Activated naive CD4-positive, alpha-beta T cell treated with anti-CD3 and anti-CD28 coated beads for 36 hours (primary cell): ENCODE measurements at regions of chr11 and their contacts with region 1.

Region 1: GRCh38 chr11:13861411-13861810 is 101.1 kb upstream of the SPON1 start:
- DNase-seq: peak; percentile 45
- H3K4me3 Mint-ChIP-seq: no peak overlapping the region
- H3K27ac Mint-ChIP-seq: peak overlapping the region; percentile 43
- H3K4me1 Mint-ChIP-seq: peaks cover 34% of the 10 kb centered on the region
- H3K27me3 Mint-ChIP-seq: no peaks in the 10 kb centered on the region

Region 2: DNA sequence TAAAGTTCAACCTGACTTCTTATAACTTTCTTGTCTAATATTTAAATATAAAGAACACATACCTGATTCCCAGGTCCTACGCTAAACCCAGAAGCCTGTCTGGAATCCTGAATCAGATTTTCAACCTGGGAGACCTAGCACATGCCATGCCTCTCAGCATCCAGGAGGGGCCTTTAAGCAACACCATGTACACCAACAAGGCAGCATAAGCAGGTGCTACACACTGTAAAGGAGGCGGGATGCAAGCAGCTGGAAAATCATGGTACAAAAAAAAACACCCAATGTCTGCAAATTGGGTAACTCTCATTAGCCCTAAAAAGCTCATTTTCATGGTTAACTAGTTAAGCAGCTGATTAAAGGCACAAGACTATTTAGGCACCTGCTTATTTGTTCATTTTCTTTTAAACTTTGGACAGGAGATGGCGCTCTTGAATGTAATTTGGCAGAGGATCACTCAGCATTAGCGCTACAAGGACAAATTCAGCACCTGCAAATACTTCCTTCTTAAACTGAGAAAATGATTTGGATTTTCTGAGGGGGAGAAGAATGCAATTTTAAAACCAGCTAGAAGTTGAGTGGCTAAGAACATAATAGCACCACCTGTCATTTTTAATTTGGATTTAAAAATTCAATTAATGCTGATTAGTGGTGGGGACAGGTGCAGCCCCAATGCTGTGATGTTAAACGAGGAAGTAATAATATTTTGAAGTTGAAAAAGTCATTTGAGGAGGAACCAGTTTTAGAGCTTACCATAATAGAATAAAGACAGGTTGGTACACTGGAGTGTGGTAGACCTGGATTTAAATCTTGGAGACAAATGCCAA is 89.0 kb before region 1 on chr11:
- CTCF ChIA-PET with region 1: interaction called, 4 read pairs
- intact Hi-C with region 1: loop called (anchors 2 kb)
- DNase-seq: peak; percentile 35
- H3K4me3 Mint-ChIP-seq: no peak overlapping the region
- H3K27ac Mint-ChIP-seq: no peak overlapping the region
- H3K4me1 Mint-ChIP-seq: no peaks in the 10 kb centered on the region
- H3K27me3 Mint-ChIP-seq: no peaks in the 10 kb centered on the region